Activated naive CD4-positive, alpha-beta T cell treated with anti-CD3 and anti-CD28 coated beads for 36 hours (primary cell): ENCODE measurements at regions of chr1 and their contacts with region 1.

Region 1: GRCh38 chr1:110053557-110054428 is 16.7 kb downstream of the ALX3 start:
- DNase-seq: peak; percentile 81
- H3K4me3 Mint-ChIP-seq: no peak overlapping the region
- H3K27ac Mint-ChIP-seq: no peak overlapping the region
- H3K4me1 Mint-ChIP-seq: no peaks in the 10 kb centered on the region
- H3K27me3 Mint-ChIP-seq: no peaks in the 10 kb centered on the region

Region 2: GRCh38 chr1:110040548-110040947 is 13.2 kb before region 1 on chr1:
- CTCF ChIA-PET with region 1: interaction called, 33 read pairs
- intact Hi-C with region 1: no loop called
- DNase-seq: peak; percentile 14
- H3K4me3 Mint-ChIP-seq: no peak overlapping the region
- H3K27ac Mint-ChIP-seq: no peak overlapping the region
- H3K4me1 Mint-ChIP-seq: peaks cover 19% of the 10 kb centered on the region
- H3K27me3 Mint-ChIP-seq: no peaks in the 10 kb centered on the region

Region 3: DNA sequence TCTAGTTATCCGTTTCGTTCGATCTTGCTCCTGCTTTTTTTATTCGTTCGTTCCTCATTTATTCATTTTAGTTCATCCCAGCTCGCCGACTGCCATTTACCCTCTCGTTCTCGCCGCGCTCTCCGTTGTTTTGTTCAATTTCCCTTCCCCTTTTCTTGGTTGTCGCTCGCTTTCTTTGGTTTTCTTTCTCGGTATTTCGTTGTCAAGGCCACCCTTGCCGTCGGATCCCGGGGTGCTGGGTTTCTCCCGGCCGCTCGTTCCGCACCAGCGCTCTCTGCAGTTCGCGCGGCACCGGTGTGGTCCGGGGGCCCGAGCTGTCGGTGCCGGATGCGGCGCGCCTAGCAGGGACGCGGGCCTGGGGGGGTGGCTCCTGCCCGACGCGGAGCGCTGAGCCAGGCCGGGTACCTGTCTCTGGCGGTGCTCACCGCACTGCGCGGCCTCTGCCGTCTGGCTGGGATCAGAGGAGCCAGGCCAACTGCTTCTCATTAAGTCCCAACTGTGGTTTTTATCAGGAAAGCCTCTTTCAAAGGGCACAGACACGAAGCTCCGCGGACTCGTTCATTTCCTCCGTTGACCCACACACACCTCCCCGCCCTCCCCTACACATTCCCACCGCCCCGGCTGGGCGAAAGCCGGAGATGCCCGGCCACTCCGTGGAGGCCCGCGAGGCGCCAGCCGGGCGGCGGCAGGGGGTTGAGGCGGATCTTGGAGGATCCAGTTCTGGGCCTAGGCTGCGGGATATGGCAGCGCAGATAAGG is 15.0 kb after region 1 on chr1:
- CTCF ChIA-PET with region 1: interaction called, 42 read pairs
- intact Hi-C with region 1: no loop called
- DNase-seq: no peak
- H3K4me3 Mint-ChIP-seq: peak overlapping the region; percentile 30
- H3K27ac Mint-ChIP-seq: no peak overlapping the region
- H3K4me1 Mint-ChIP-seq: peaks cover 14% of the 10 kb centered on the region
- H3K27me3 Mint-ChIP-seq: peaks cover 59% of the 10 kb centered on the region

Region 4: GRCh38 chr1:110076789-110077500 is 23.2 kb after region 1 on chr1:
- CTCF ChIA-PET with region 1: interaction called, 16 read pairs
- intact Hi-C with region 1: no loop called
- DNase-seq: no peak
- H3K4me3 Mint-ChIP-seq: no peak overlapping the region
- H3K27ac Mint-ChIP-seq: no peak overlapping the region
- H3K4me1 Mint-ChIP-seq: no peaks in the 10 kb centered on the region
- H3K27me3 Mint-ChIP-seq: peaks cover 26% of the 10 kb centered on the region

Region 5: GRCh38 chr1:110082477-110082876 is 28.7 kb after region 1 on chr1:
- CTCF ChIA-PET with region 1: interaction called, 15 read pairs
- intact Hi-C with region 1: no loop called
- DNase-seq: no peak
- H3K4me3 Mint-ChIP-seq: no peak overlapping the region
- H3K27ac Mint-ChIP-seq: no peak overlapping the region
- H3K4me1 Mint-ChIP-seq: peaks cover 9% of the 10 kb centered on the region
- H3K27me3 Mint-ChIP-seq: peaks cover 53% of the 10 kb centered on the region

Region 6: GRCh38 chr1:110097887-110098681 is 44.3 kb after region 1 on chr1:
- CTCF ChIA-PET with region 1: interaction called, 103 read pairs
- intact Hi-C with region 1: no loop called
- DNase-seq: no peak
- H3K4me3 Mint-ChIP-seq: no peak overlapping the region
- H3K27ac Mint-ChIP-seq: no peak overlapping the region
- H3K4me1 Mint-ChIP-seq: no peaks in the 10 kb centered on the region
- H3K27me3 Mint-ChIP-seq: peaks cover 4% of the 10 kb centered on the region

Region 7: GRCh38 chr1:110106013-110106941 is 52.5 kb after region 1 on chr1:
- CTCF ChIA-PET with region 1: interaction called, 103 read pairs
- intact Hi-C with region 1: loop called (anchors 1 kb)
- DNase-seq: peak; percentile 78
- H3K4me3 Mint-ChIP-seq: no peak overlapping the region
- H3K27ac Mint-ChIP-seq: no peak overlapping the region
- H3K4me1 Mint-ChIP-seq: no peaks in the 10 kb centered on the region
- H3K27me3 Mint-ChIP-seq: peaks cover 2% of the 10 kb centered on the region